ENCODE measurements at regions of chr19 and their contacts with region 1.

Region 1: GRCh38 chr19:47619763-47620162 is 10.8 kb downstream of the BICRA start:
- DNase-seq: no peak
- ATAC-seq: no peak
- H3K4me3 ChIP-seq: no peak overlapping the region
- H3K27ac ChIP-seq: peak overlapping the region in 2 of 10 donors; percentile 21 to 72
- H3K4me1 ChIP-seq: peaks cover 6 to 62% (median 36%) of the 10 kb centered on the region in 9 donors
- H3K27me3 ChIP-seq: no peaks in the 10 kb centered on the region
- CTCF ChIP-seq: no peak

Region 2: DNA sequence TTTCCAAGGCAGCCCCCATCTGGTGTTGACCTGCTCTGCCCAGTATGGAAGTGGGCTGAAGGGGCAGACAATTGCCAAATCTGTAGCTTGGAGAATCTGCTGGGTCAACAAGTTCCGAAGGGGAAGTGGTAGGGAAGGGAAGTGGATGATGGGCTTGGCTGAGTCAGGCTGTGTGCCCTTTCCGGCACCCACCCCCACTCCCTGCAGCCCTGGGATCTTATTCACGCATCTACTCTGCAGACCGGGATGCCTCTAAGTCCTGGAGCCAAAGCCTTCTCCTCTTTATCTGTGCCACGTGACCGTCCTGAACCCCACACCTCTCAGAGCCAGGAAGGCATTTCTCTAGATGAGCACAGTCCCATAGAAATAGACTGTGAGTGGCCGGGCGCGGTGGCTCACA is 295.3 kb before region 1 on chr19:
- intact Hi-C with region 1: no loop called
- DNase-seq: peak in 1 of 2 donors; percentile 44
- ATAC-seq: peak; percentile 67 to 91 (median 86)
- H3K4me3 ChIP-seq: no peak overlapping the region
- H3K27ac ChIP-seq: peak overlapping the region in 6 of 10 donors; percentile 30 to 88 (median 58)
- H3K4me1 ChIP-seq: peaks cover 0 to 37% (median 0%) of the 10 kb centered on the region in 9 donors
- H3K27me3 ChIP-seq: peaks cover 0 to 52% (median 17%) of the 10 kb centered on the region in 7 donors
- CTCF ChIP-seq: no peak

Region 3: DNA sequence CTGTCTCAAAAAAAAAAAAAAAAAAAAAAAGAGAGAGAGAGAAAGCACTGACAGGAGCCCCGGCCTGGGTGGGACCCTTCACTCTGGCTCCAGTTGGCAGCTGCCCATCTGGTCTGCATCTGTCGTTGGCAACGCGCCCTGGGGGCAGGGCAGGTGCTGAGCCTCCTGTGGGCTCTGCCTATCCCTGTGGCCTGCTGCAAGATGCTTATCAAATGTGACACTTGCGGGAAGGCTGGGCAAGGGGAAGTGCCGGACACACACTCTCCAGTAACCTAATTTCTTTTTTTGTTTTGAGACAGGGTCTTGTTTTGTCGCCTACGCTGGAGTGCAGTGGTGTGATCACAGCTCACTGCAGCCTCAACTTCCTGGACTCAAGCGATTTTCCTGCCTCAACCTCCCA is 125.0 kb before region 1 on chr19:
- intact Hi-C with region 1: no loop called
- DNase-seq: no peak
- ATAC-seq: no peak
- H3K4me3 ChIP-seq: no peak overlapping the region
- H3K27ac ChIP-seq: peak overlapping the region in 1 of 10 donors; percentile 71
- H3K4me1 ChIP-seq: peaks cover 0 to 70% (median 36%) of the 10 kb centered on the region in 9 donors
- H3K27me3 ChIP-seq: no peaks in the 10 kb centered on the region
- CTCF ChIP-seq: no peak

Region 4: GRCh38 chr19:47663841-47664771 is 44.3 kb after region 1 on chr19:
- intact Hi-C with region 1: loop called in 8 of 10 experiments (anchors 5 to 10 kb)
- DNase-seq: peak in 1 of 2 donors; percentile 79
- ATAC-seq: peak; percentile 80 to 88 (median 83)
- H3K4me3 ChIP-seq: no peak overlapping the region
- H3K27ac ChIP-seq: peak overlapping the region; percentile 67 to 95 (median 89)
- H3K4me1 ChIP-seq: peaks cover 8 to 89% (median 60%) of the 10 kb centered on the region in 9 donors
- H3K27me3 ChIP-seq: no peaks in the 10 kb centered on the region
- CTCF ChIP-seq: no peak

Measured in heart right ventricle (tissue), 16 donors.